ENCODE measurements at regions of chr6 and their contacts with region 1.

Region 1: DNA sequence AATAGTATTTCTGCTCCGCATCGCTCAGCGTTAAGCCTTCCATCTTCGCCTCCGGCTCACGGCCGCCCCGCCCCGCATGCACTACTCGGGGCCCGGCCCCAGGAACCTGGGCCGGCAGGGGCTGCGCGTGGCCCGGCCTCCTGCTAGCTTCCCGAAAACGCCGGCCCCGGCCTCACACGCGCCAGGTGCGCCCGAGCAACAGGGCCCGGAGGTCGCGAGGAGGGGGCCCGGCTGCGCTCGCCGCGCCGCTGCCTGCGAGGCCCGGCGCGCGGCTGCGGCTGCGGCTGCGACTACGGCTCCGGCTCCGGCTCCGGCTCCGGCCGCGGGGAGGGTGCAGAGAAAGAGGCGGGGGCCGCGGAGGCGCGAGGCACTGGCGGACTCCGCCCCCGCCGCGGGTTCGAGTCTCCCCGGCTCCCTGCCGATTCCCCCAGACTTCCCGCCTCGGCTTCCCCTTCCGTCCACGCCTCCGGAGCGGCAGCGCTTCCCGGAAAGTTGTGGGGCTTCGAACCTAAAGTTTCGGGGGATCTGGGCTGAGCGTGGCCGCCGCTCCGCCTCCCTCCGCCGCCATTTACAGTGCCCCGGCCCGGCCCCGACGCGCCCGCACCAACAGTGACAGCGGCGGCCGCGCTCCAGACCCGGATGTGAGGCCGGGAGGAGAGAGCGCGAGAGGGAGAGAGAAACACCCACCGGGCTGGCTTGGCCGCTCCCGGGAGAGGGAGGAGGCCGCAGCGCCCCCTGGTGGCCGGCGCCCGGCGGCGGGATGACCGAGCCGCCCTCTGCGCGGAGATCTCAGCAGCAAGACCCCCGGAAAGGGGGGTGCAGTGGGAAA is at the start of gene REPS1:
- DNase-seq: peak; percentile 94
- H3K4me3 Mint-ChIP-seq: peak within 1 kb of the TSS; percentile 85
- H3K27ac Mint-ChIP-seq: peak within 1 kb of the TSS; percentile 89
- H3K4me1 Mint-ChIP-seq: peaks cover 19% of the 10 kb centered on the region
- H3K27me3 Mint-ChIP-seq: no peaks in the 10 kb centered on the region
- total RNA-seq, gene REPS1: 50.7 to 57.9 TPM

Region 2: GRCh38 chr6:138404662-138405337 is 583.1 kb before region 1 on chr6:
- CTCF ChIA-PET with region 1: no interaction called
- POLR2A ChIA-PET with region 1: no interaction called
- intact Hi-C with region 1: no loop called
- DNase-seq: peak; percentile 44
- H3K4me3 Mint-ChIP-seq: peak overlapping the region; percentile 79
- H3K27ac Mint-ChIP-seq: peak overlapping the region; percentile 44
- H3K4me1 Mint-ChIP-seq: peaks cover 27% of the 10 kb centered on the region
- H3K27me3 Mint-ChIP-seq: no peaks in the 10 kb centered on the region

Region 3: GRCh38 chr6:138692058-138692977 is 295.5 kb before region 1 on chr6:
- CTCF ChIA-PET with region 1: no interaction called
- POLR2A ChIA-PET with region 1: no interaction called
- intact Hi-C with region 1: loop called (anchors 2 kb)
- DNase-seq: peak; percentile 64
- H3K4me3 Mint-ChIP-seq: peak overlapping the region; percentile 73
- H3K27ac Mint-ChIP-seq: no peak overlapping the region
- H3K4me1 Mint-ChIP-seq: peaks cover 9% of the 10 kb centered on the region
- H3K27me3 Mint-ChIP-seq: peaks cover 27% of the 10 kb centered on the region

Region 4: GRCh38 chr6:138944412-138944811 is 43.4 kb before region 1 on chr6:
- CTCF ChIA-PET with region 1: interaction called, 4 read pairs
- POLR2A ChIA-PET with region 1: no interaction called
- intact Hi-C with region 1: loop called (anchors 2 kb)
- DNase-seq: peak; percentile 62
- H3K4me3 Mint-ChIP-seq: no peak overlapping the region
- H3K27ac Mint-ChIP-seq: no peak overlapping the region
- H3K4me1 Mint-ChIP-seq: peaks cover 43% of the 10 kb centered on the region
- H3K27me3 Mint-ChIP-seq: no peaks in the 10 kb centered on the region

Region 5: GRCh38 chr6:139028658-139029469 is 41.0 kb after region 1 on chr6 and contains the start of gene ABRACL:
- CTCF ChIA-PET with region 1: interaction called, 3 read pairs
- POLR2A ChIA-PET with region 1: interaction called, 10 read pairs
- intact Hi-C with region 1: loop called (anchors 1 kb)
- DNase-seq: peak; percentile 91
- H3K4me3 Mint-ChIP-seq: no peak within 1 kb of the TSS
- H3K27ac Mint-ChIP-seq: no peak within 1 kb of the TSS
- H3K4me1 Mint-ChIP-seq: peaks cover 20% of the 10 kb centered on the region
- H3K27me3 Mint-ChIP-seq: no peaks in the 10 kb centered on the region
- total RNA-seq, gene ABRACL: 179 to 182 TPM

Region 6: GRCh38 chr6:139161817-139162284 is 174.0 kb after region 1 on chr6:
- CTCF ChIA-PET with region 1: no interaction called
- POLR2A ChIA-PET with region 1: no interaction called
- intact Hi-C with region 1: loop called (anchors 5 kb)
- DNase-seq: peak; percentile 88
- H3K4me3 Mint-ChIP-seq: peak overlapping the region; percentile 61
- H3K27ac Mint-ChIP-seq: peak overlapping the region; percentile 96
- H3K4me1 Mint-ChIP-seq: peaks cover 92% of the 10 kb centered on the region
- H3K27me3 Mint-ChIP-seq: no peaks in the 10 kb centered on the region

Measured in activated CD4-positive, alpha-beta memory T cell treated with anti-CD3 and anti-CD28 coated beads for 36 hours (primary cell).